HepG2 (cell line): ENCODE measurements at regions of chr11 and their contacts with region 1.

Region 1: DNA sequence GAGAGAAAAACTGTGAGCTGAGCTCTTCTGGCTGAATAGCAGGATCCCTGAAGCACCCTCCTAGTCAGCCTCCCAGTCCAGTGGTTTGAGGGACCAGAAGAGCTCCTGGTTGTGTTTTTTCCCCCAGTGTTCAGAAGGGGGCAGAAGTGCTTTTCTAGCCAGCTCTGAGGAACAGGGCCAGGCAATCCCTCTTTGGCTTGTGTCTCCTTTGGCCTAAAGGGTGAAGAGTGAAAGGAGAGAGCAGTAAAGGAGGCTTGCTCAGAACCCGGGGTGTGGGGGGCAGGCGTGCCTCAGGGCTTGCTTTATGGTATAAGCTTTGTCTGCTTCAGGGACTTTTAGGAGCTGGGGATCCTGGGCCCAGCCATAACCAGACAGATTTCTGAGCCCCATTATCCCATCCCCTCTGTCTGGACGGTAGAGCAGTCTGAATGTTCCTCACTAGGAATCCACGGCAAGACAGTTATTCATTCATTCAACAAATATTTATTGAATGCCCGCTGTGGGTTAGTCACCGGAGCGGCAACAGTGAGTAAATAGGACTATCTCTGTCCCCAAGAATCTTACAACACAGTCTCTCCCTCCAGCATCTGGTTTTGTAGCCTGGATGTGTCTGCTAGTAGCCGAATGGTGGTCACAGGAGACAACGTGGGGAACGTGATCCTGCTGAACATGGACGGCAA is 14.5 kb downstream of the ACP2 start:
- DNase-seq: peak; percentile 41
- ATAC-seq: peak; percentile 69
- H3K4me3 ChIP-seq: no peak overlapping the region
- H3K27ac ChIP-seq: no peak overlapping the region
- H3K4me1 ChIP-seq: peaks cover 16% of the 10 kb centered on the region
- H3K27me3 ChIP-seq: no peaks in the 10 kb centered on the region
- CTCF ChIP-seq: peak; percentile 59
- EP300 ChIP-seq: no peak
- POLR2A ChIP-seq: no peak; a peak in 1 of 4 replicates
- RAD21 ChIP-seq: peak; percentile 40; the same call in 1 of the 2 replicates

Region 2: DNA sequence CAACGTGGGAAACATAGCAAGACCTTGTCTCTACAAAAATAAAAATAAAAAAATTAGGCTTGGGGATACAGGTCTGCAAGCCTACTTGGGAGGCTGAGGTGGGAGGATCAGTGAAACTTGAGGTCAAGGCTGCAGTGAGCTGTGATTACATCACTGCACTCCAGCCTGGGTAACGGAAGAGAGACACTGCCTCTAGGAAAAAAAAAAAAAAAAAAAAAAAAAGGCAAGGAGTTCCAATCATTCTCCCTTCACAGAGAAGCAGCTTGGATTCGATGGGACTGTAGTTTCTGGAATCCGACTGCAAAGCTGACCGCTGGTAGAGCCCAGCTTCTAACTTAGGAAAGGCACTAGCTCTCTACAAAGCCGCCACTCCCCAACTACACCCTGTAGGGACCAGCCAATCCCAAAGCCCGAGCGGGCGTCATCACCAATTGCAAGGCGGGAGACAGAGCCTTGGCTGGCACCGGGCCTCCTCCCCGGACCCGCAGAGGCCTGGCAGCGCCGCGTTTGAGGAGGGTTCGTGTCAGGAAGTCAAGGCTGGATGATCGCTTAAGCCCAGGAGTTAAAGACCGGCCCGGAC is 20.1 kb before region 1 on chr11:
- CTCF ChIA-PET with region 1: no interaction called
- POLR2A ChIA-PET with region 1: interaction called, 25 read pairs
- in situ Hi-C with region 1: no loop called
- intact Hi-C with region 1: no loop called
- DNase-seq: peak; percentile 86
- ATAC-seq: peak; percentile 90
- H3K4me3 ChIP-seq: peak overlapping the region; percentile 70 to 86 (median 79)
- H3K27ac ChIP-seq: peak overlapping the region; percentile 73
- H3K4me1 ChIP-seq: peaks cover 57% of the 10 kb centered on the region
- H3K27me3 ChIP-seq: no peaks in the 10 kb centered on the region; a peak in 1 of 5 replicates
- CTCF ChIP-seq: no peak
- EP300 ChIP-seq: no peak
- POLR2A ChIP-seq: peak; percentile 21 to 58; a peak in 3 of 4 replicates
- RAD21 ChIP-seq: no peak